ENCODE measurements at regions of chr1 and their contacts with region 1.

Region 1: DNA sequence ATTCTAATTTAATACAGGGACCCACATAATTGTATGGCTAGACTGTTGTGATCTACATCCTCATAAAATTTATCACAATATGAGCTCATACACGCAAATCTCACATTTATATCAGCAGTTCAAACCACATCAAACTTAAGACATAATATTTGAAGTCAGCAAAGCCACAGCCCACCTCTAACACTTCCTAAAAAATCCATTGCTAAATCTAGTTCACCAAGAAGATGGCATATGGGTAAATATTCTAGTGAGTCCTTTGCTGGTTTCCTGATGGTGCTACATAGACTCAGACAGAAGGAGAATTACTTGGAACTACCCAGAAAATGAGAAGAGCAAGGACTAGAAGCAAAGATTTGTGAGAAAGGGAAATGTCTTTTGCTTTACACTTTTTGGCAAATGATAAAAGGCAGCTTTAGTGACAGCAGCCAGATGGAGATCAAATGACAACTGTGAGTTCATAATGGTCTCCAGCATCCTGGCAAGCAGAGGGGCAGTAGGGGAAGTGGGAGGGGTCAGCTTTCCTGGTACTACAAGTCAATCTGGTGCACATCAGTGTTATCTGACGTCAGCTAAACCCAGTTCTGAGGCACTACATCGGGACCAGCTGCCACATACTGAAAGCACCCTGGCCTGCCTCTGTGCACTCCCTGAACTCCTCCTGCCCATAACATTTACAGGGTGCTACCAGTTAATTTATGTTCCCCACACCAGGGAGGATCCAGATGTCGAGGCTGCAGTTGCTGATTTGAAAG is 10.6 kb upstream of the GADD45A start:
- DNase-seq: no peak
- ATAC-seq: peak; percentile 62
- H3K4me3 ChIP-seq: no peak overlapping the region
- H3K27ac ChIP-seq: peak overlapping the region; percentile 26
- H3K4me1 ChIP-seq: peaks cover 32% of the 10 kb centered on the region
- H3K27me3 ChIP-seq: no peaks in the 10 kb centered on the region
- CTCF ChIP-seq: no peak

Region 2: GRCh38 chr1:67535474-67535873 is 139.0 kb before region 1 on chr1:
- CTCF ChIA-PET with region 1: no interaction called
- POLR2A ChIA-PET with region 1: no interaction called
- in situ Hi-C with region 1: loop called (anchors 25 kb)
- intact Hi-C with region 1: no loop called
- DNase-seq: peak; percentile 70
- ATAC-seq: peak; percentile 87
- H3K4me3 ChIP-seq: no peak overlapping the region
- H3K27ac ChIP-seq: peak overlapping the region; percentile 79
- H3K4me1 ChIP-seq: peaks cover 18% of the 10 kb centered on the region
- H3K27me3 ChIP-seq: no peaks in the 10 kb centered on the region
- CTCF ChIP-seq: peak; percentile 98

Region 3: DNA sequence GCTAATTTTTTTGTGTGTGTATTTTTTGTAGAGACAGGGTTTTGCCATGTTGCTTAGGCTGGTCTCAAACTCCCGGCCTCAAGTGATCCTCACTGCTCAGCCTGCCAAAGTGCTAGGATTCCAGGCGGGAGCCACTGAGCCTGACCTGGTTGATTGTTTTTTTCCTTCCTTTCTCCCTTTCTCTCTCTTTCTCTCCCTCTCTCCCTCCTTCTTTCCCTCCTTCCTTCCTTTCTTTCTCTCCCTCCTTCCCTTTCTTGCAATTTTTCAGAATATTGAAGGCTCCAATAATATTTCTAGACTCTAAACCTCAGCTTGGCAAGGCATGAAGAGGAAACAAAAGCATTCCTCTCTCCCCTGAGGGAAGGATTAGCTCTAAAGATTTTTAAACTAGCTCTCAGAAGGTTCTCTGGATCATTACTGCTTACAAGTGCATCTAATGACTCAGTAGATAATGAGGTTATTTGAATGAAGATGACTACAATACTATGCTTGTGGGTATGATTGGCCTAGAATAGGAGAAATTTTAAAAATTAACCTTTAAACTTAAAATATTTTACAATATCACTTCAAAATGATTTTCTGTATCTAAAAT is 57.9 kb before region 1 on chr1:
- CTCF ChIA-PET with region 1: no interaction called
- POLR2A ChIA-PET with region 1: interaction called, 11 read pairs
- in situ Hi-C with region 1: no loop called
- intact Hi-C with region 1: no loop called
- DNase-seq: no peak
- ATAC-seq: no peak
- H3K4me3 ChIP-seq: no peak overlapping the region
- H3K27ac ChIP-seq: peak overlapping the region; percentile 54; the same call in 1 of the 2 replicates
- H3K4me1 ChIP-seq: peaks cover 34% of the 10 kb centered on the region
- H3K27me3 ChIP-seq: no peaks in the 10 kb centered on the region
- CTCF ChIP-seq: no peak

Region 4: DNA sequence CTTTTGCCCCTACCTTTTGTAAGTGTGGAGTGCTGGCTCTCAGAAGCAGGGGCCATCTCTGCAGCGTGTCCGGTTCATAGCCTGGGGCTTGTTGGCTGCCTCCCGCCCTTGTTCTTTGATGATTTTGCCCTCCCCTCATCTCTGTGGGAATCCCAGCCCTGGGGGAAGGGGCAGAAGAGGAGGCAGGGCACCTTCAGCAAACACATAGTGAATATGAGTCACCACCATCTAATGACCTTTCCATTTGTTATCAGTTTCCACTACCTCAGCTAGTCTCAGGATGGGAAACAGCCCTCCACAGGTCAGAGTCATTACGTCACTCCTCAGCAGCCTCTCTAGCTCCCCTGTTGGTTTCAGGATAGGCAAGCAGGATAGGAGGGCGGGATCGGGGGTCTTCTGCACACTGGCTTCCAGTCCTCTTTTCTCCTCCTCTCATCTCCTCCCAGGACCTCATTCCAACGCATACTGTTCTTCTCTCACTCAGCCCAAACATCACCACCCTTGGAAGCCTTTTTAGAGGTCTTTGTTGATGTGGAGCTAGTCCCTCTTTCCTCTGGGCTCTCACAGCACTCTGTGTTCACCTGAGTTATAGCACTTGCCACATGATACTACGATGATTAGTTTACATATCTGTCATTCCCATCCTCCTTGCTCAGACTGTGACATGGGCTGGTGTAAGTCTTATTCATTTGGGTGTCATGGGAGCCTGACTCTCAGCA is 26.4 kb after region 1 on chr1:
- CTCF ChIA-PET with region 1: no interaction called
- POLR2A ChIA-PET with region 1: no interaction called
- in situ Hi-C with region 1: no loop called
- intact Hi-C with region 1: no loop called
- DNase-seq: no peak
- ATAC-seq: peak; percentile 75
- H3K4me3 ChIP-seq: no peak overlapping the region
- H3K27ac ChIP-seq: peak overlapping the region; percentile 27
- H3K4me1 ChIP-seq: peaks cover 14% of the 10 kb centered on the region; the same call in 1 of the 2 replicates
- H3K27me3 ChIP-seq: no peaks in the 10 kb centered on the region
- CTCF ChIP-seq: no peak; the same call in 1 of the 2 replicates

Measured in Panc1 (cell line).